Right ventricle myocardium inferior (tissue), 1 donor: ENCODE measurements at regions of chr21 and their contacts with region 1.

Region 1: GRCh38 chr21:29002442-29003144 is 9.9 kb upstream of the LTN1 start:
- DNase-seq: peak; percentile 97
- ATAC-seq: peak; percentile 100

Region 2: GRCh38 chr21:29018540-29018939 is 15.9 kb after region 1 on chr21:
- intact Hi-C with region 1: loop called (anchors 2 kb)
- DNase-seq: no peak
- ATAC-seq: no peak